ENCODE measurements at regions of chr13 and their contacts with region 1.

Region 1: DNA sequence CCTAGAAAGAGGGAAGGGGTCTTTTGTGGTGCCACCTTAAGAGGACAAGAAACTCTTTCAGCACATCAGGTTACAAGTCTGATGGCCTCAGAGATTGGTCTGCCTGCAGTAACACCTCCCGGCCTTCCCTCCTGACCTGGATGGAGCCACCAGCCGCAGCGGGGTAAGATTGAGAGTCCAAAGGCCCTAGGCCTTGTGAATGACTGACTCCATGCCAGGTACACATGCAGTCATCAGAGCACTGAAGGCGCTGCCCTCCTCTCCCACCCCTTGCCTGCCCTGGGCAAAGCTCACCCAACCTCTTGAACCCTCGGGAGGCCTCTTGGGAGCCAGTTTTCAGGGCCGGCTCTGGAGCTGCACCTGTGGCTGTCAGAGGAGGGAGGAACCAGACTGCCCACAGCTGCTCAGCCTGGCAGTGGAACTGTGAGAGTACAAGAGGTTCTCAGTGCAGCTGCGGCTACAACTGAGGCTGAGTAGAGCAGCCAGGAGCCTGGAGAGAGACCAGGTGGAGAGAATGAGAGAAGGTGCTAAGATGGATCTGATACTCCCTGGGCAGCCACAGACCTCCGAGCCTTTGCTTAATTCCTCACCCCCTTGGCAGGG is 23.8 kb upstream of the C13orf42 start:
- DNase-seq: no peak
- H3K4me3 ChIP-seq: no peak overlapping the region
- H3K27ac ChIP-seq: no peak overlapping the region
- H3K4me1 ChIP-seq: peaks cover 0 to 1% (median 0%) of the 10 kb centered on the region in 4 experiments
- H3K27me3 ChIP-seq: no peaks in the 10 kb centered on the region

Region 2: GRCh38 chr13:51148952-51149573 is 14.2 kb after region 1 on chr13:
- CTCF ChIA-PET with region 1: interaction called, 11 read pairs
- POLR2A ChIA-PET with region 1: no interaction called
- DNase-seq: peak; percentile 29 to 59 (median 57)
- H3K4me3 ChIP-seq: no peak overlapping the region
- H3K27ac ChIP-seq: no peak overlapping the region
- H3K4me1 ChIP-seq: no peaks in the 10 kb centered on the region
- H3K27me3 ChIP-seq: no peaks in the 10 kb centered on the region

Measured in common myeloid progenitor, CD34-positive (primary cell).